ENCODE measurements at regions of chr4 and their contacts with region 1.

Region 1: GRCh38 chr4:48963042-48963679 is 22.9 kb upstream of the CWH43 start:
- DNase-seq: peak in 2 of 3 donors; percentile 46 to 74
- ATAC-seq: peak; percentile 97
- H3K4me3 ChIP-seq: no peak overlapping the region
- H3K4me1 ChIP-seq: no peaks in the 10 kb centered on the region
- CTCF ChIP-seq: peak; percentile 78

Region 2: DNA sequence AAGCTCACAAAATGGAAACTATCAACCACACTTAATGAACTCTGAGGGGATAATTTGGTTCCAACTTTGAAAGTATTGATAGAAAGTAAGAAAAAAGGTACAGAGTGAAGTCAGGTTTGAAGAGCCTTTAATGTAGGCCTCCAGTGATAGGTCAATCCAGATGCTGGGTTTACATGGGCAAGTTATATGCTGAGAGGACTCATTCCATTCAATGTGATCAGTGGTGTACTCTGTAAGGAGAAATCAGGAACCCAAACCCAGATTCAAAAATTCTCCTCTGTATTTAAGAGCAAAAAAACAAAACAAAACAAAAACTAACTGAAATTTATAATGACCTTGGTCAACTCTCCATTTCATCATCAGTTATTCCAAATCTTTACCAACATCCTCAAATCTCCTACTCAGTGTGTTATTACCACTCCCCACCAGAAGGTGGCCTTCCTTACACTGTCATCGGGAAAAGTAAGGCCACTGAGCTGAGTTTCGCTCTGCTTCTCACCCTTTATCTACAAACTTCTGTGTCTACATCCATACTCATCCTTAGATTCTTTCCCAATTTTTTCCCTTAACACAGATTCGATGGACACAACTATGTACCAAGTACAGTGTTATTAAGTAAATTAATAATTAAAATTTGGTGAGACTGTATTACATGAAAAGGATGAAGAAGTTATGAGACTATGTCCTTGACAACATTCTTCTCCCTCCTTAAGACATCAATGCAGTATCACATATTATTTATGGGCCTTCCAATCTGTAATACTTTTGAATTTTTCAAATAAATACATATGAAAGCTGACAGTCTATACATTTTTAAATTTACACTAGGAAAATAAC is 384.8 kb before region 1 on chr4:
- intact Hi-C with region 1: loop called in 1 of 2 experiments (anchors 5 kb)
- DNase-seq: peak in 1 of 3 donors; percentile 87
- ATAC-seq: peak; percentile 96
- H3K4me3 ChIP-seq: no peak overlapping the region
- H3K4me1 ChIP-seq: no peaks in the 10 kb centered on the region
- CTCF ChIP-seq: peak; percentile 77

Region 3: GRCh38 chr4:48692897-48693296 is 270.3 kb before region 1 on chr4:
- intact Hi-C with region 1: no loop called
- DNase-seq: no peak
- ATAC-seq: no peak
- H3K4me3 ChIP-seq: no peak overlapping the region
- H3K4me1 ChIP-seq: peaks cover 2% of the 10 kb centered on the region
- CTCF ChIP-seq: no peak